Stomach (tissue), 19 donors: ENCODE measurements at regions of chr14 and their contacts with region 1.

Region 1: GRCh38 chr14:99884834-99885648 is 91.8 kb downstream of the EML1 start:
- DNase-seq: peak in 1 of 2 donors; percentile 82
- H3K4me3 ChIP-seq: no peak overlapping the region
- H3K27ac ChIP-seq: no peak overlapping the region
- H3K4me1 ChIP-seq: peaks cover under 1 to 7% (median 4%) of the 10 kb centered on the region in 4 donors
- H3K27me3 ChIP-seq: no peaks in the 10 kb centered on the region
- CTCF ChIP-seq: peak in 5 of 7 experiments; percentile 43 to 76 (median 64)
- EP300 ChIP-seq: no peak
- POLR2A ChIP-seq: no peak

Region 2: GRCh38 chr14:99729991-99730868 is 154.8 kb before region 1 on chr14:
- intact Hi-C with region 1: loop called (anchors 5 kb)
- DNase-seq: peak; percentile 76 to 90
- H3K4me3 ChIP-seq: peak overlapping the region; percentile 54 to 61 (median 57)
- H3K27ac ChIP-seq: peak overlapping the region in 2 of 5 donors; percentile 61 to 68
- H3K4me1 ChIP-seq: peaks cover 16 to 51% (median 34%) of the 10 kb centered on the region in 4 donors
- H3K27me3 ChIP-seq: peaks cover 0 to 33% (median 16%) of the 10 kb centered on the region in 3 donors
- CTCF ChIP-seq: peak in 6 of 7 experiments; percentile 11 to 98 (median 76)
- EP300 ChIP-seq: no peak
- POLR2A ChIP-seq: no peak